ENCODE measurements at regions of chr18 and their contacts with region 1.

Region 1: DNA sequence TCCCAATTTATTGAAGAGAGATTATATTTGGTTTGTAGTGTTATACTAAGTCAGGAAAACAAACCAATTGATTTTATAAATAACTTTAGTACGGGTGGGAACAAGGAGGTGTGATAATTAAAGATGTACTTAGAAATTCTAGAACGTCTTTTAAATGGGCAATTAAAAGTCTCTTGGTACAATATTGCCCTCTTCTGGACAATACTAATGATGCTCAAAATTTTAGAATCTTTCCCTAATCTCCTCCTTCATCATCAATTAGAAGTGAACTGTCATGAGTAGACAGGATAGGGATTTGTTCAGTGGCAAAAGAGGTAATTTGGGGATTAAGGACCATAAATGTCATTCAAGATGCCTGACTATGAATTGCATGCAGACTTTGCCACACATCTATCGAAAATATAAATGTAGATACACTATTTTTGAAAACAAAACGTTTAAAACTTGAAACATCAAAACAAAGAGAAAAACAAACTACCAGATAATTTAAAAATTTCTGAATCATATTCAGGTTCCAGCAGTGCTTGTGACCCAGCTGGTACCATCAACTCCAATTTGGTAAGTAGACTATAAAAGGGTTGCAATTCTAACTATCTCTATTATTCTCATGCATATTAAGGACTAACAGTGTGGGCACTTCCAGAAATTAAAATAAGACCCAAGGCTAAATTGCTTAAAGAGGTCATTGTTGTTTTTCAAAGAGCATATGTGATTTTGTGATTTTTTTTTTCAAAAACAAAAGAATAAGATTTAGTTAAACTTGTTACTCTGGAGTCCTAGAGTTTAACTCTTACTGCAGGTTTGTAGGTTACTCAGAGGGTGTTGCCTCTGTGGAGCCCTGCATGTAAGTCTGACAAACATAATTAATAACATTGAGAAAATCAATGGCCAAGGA is 123.5 kb downstream of the LAMA3 start:
- DNase-seq: no peak
- ATAC-seq: peak in 1 of 4 donors; percentile 46
- H3K4me3 ChIP-seq: no peak overlapping the region
- H3K27ac ChIP-seq: no peak overlapping the region
- H3K4me1 ChIP-seq: no peaks in the 10 kb centered on the region
- H3K27me3 ChIP-seq: no peaks in the 10 kb centered on the region
- CTCF ChIP-seq: peak; percentile 51

Region 2: DNA sequence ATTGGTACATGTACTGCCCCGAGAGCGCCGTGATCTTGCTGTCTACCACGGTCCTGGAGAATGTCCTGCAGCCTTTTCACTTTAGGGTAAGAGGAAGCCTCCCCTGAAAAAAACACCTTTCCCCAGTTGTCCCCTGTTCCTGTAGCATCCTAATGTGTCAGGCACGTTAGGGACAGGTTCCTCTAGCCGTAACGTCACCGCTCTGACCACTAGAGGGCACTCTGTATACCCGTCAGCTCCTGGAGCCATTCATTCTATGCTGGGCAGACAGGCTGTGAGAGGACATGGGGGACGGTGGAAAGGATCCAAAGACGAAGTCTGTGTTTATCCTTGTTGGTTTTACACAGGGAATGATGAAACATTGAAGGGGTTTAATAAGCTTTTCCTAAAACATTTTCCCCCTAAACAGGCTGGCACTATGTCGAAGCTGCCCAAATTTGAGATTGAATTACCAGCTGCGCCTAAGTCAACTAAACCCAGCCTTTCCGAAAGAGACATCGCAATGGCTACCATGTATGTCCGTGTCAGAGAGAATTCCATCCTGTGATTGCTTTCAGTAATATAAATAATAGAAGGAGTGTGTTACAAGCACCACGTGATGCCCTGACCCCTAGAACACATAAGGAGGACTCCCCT is 296.8 kb before region 1 on chr18:
- intact Hi-C with region 1: loop called in 1 of 2 experiments (anchors 10 kb)
- DNase-seq: peak; percentile 48 to 74
- ATAC-seq: peak; percentile 87 to 96 (median 94)
- H3K4me3 ChIP-seq: no peak overlapping the region
- H3K27ac ChIP-seq: no peak overlapping the region
- H3K4me1 ChIP-seq: no peaks in the 10 kb centered on the region
- H3K27me3 ChIP-seq: no peaks in the 10 kb centered on the region
- CTCF ChIP-seq: peak; percentile 87

Region 3: GRCh38 chr18:23623040-23623439 is 189.8 kb before region 1 on chr18:
- intact Hi-C with region 1: loop called (anchors 5 to 10 kb)
- DNase-seq: no peak
- ATAC-seq: no peak
- H3K4me3 ChIP-seq: no peak overlapping the region
- H3K27ac ChIP-seq: no peak overlapping the region
- H3K4me1 ChIP-seq: peaks cover 18% of the 10 kb centered on the region
- H3K27me3 ChIP-seq: peaks cover 0 to 24% (median 5%) of the 10 kb centered on the region in 3 donors
- CTCF ChIP-seq: no peak

Region 4: DNA sequence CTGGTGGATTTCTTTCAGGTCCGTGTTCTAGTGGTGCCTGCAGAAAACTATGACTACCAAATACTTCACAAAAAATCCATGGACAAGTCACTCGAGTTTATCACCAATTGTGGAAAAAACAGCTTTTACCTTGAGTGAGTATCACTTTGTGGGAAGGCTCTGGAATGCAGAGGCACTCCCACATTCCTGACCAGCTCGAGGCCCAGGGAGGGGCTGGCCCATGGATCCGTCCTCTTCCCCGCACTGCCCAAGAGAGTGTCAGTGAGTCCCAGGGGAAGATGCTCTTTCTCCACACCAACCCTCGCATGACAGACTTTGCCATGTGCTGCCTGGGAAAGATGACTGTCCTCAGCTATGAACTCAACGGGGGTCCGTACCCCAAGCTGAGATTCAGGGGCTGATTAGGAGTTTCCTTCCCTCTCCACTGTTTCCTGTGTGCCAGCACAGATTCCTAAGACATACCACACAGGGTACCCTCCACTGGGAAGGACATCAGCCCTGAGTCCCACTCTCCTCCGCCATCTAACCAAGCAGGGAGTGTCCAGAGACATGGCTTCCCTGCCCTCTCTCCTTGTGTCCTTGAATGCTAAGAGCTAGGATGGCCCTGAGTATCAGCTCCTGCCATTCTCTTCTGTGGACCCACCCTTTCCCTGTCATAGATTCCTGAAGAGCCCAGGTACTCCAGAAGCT is 32.3 kb after region 1 on chr18:
- intact Hi-C with region 1: no loop called
- DNase-seq: no peak
- ATAC-seq: no peak
- H3K4me3 ChIP-seq: no peak overlapping the region
- H3K27ac ChIP-seq: no peak overlapping the region
- H3K4me1 ChIP-seq: no peaks in the 10 kb centered on the region
- H3K27me3 ChIP-seq: no peaks in the 10 kb centered on the region
- CTCF ChIP-seq: no peak

Region 5: DNA sequence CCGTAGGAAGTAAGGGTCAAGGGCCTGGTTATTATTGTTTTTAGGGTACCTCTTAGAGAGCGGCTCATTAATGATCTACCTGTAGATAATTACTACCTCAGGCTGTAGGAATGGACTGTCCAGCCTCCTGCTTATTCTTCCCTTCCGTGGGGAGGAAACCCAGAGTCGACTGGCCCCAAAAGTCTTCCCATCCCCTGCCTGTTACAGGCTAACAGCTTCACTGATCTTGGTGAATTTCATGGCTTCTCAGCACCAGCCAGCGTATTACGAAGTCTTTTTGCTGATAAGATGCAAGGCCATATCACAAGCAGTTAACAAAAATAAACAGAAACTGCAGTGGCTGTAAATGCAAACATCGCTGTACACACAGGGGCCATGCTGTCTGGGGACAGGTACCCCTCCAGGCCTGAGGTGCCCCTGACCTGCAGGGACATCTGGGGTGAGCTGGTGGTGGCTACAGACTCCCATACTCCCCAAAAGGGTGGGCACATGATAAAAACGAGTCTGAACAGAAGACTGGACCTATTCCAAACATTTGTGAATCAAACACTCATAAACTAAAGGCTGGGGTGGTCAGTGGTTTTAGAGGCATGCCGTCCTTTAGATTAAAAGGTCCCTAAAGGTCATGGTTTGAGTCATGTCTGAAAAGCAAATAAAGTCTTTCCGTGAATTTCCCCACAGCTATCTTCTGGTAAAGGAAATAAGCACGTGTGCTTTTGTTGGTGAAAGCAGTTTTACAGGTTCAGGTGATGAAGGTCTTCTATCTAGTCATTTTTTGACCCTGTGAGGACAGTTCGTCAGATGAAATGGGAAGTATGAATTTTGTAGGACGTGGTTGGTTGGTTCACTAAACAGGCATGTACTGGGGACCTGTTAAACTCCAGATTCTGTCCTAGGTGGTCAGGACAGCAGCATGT is 238.5 kb after region 1 on chr18:
- intact Hi-C with region 1: loop called in 1 of 2 experiments (anchors 10 kb)
- DNase-seq: no peak
- ATAC-seq: no peak
- H3K4me3 ChIP-seq: no peak overlapping the region
- H3K27ac ChIP-seq: no peak overlapping the region
- H3K4me1 ChIP-seq: no peaks in the 10 kb centered on the region
- H3K27me3 ChIP-seq: peaks cover 0 to 2% (median 0%) of the 10 kb centered on the region in 3 donors
- CTCF ChIP-seq: no peak

Region 6: DNA sequence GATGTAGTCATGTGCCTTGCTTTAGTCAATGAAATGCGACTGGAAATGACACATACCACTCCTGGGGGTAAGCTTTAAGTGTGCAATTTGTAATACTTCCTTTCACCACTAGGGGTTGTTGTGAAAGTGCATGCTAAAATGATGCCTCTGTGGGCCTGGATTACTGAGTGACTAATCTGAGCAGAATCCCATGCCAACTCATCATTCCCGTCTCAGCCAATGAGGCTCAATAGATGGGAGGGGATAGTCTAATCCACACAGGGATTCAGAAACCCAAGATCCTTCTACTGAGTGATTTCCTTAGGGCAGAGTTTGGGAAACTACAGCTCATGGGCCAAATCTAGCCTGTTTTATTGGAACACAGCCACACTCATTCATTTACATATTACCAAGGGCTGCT is 701.6 kb after region 1 on chr18:
- intact Hi-C with region 1: no loop called
- DNase-seq: no peak
- ATAC-seq: no peak
- H3K4me3 ChIP-seq: no peak overlapping the region
- H3K27ac ChIP-seq: no peak overlapping the region
- H3K4me1 ChIP-seq: no peaks in the 10 kb centered on the region
- H3K27me3 ChIP-seq: no peaks in the 10 kb centered on the region
- CTCF ChIP-seq: peak; percentile 34